KBM-7 (cell line): ENCODE measurements at regions of chr6 and their contacts with region 1.

Region 1: DNA sequence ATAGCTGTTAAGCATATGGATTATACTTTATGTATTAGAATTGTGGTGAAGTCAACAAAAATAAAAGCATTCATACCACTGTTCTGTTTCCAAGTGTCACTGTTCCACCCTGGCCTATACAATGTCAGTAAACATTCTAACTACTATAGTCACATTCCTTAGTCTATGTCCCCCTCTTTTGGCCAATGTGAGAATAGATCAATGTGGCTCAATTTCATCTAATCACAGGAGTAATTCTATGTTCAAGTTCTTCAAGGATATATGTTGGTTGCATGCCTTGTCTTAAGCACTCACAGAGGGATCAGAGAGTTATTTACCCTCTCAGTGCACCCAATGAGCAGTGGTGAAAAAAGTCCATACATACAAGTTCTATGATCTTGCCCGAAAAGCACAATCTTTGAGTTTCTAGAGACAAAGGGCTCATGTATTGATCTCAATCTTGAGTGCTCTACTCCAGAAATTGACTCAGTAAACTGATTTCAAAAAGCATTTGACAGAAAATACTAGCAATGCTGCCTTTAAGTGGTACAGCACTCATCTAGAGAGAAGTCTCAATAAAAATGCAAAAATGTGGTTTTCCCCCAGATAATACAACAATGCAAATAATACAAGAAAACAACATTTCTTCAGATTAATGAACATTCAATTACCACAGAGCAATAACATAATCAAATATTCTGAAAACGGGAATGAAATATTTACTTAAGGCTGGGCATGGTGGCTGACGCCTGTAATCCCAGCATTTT is 16.5 kb downstream of the SMLR1 start:
- DNase-seq: peak; percentile 51

Region 2: DNA sequence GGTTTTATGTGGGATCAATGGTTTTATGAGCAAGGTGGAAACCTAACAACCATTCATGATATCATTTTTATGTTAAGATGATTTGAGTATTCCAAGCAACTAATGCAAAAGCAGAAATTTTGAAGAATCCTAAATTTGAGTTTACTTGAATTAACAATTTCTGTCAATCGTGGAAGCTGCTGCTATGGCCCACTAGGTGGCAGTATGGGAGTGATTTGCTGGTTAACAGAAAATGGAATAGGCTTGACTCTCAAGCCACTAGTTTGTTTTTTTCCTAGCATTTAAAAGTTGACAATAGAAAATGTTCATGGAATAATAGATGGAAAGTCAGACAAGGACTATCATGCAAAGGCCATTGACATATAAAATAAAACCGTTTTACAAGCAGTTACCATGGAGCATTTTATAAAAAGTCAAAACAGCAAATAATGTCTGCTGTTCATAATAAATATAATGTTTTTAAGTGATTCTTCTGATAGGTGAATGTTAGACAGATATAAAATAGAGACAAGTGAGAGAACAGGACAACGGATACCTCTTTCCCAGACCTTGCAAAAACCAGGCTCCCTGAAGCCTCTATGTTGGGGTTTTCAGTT is 521.0 kb before region 1 on chr6:
- in situ Hi-C with region 1: loop called (anchors 25 kb)
- DNase-seq: peak; percentile 49

Region 3: GRCh38 chr6:131107151-131107550 is 263.4 kb after region 1 on chr6:
- in situ Hi-C with region 1: no loop called
- DNase-seq: no peak